CD8-positive, alpha-beta T cell (primary cell): ENCODE measurements at regions of chr11 and their contacts with region 1.

Region 1: GRCh38 chr11:47578524-47579460 is at the starts of genes KBTBD4 and NDUFS3:
- DNase-seq: peak; percentile 74 to 95 (median 89)
- ATAC-seq: peak; percentile 94
- H3K4me3 ChIP-seq: peak within 1 kb of the TSS; percentile 90 to 92
- H3K4me3 Mint-ChIP-seq: peak within 1 kb of the TSS; percentile 99
- H3K27ac ChIP-seq: peak within 1 kb of the TSS; percentile 76 to 84
- H3K27ac Mint-ChIP-seq: peak within 1 kb of the TSS; percentile 97
- H3K4me1 ChIP-seq: peaks cover 31% of the 10 kb centered on the region
- H3K4me1 Mint-ChIP-seq: peaks cover 54% of the 10 kb centered on the region
- H3K27me3 ChIP-seq: no peaks in the 10 kb centered on the region
- H3K27me3 Mint-ChIP-seq: no peaks in the 10 kb centered on the region
- CTCF ChIP-seq: no peak
- total RNA-seq, gene KBTBD4: 31.8 to 32.6 TPM
- total RNA-seq, gene NDUFS3: 159 to 179 TPM

Region 2: GRCh38 chr11:47204637-47204989 is 374.2 kb before region 1 on chr11:
- CTCF ChIA-PET with region 1: no interaction called
- POLR2A ChIA-PET with region 1: no interaction called
- intact Hi-C with region 1: no loop called
- DNase-seq: no peak
- ATAC-seq: no peak
- H3K4me3 ChIP-seq: no peak overlapping the region
- H3K4me3 Mint-ChIP-seq: no peak overlapping the region
- H3K27ac ChIP-seq: no peak overlapping the region
- H3K27ac Mint-ChIP-seq: no peak overlapping the region
- H3K4me1 ChIP-seq: no peaks in the 10 kb centered on the region
- H3K4me1 Mint-ChIP-seq: no peaks in the 10 kb centered on the region
- H3K27me3 ChIP-seq: no peaks in the 10 kb centered on the region
- H3K27me3 Mint-ChIP-seq: no peaks in the 10 kb centered on the region
- CTCF ChIP-seq: no peak

Region 3: DNA sequence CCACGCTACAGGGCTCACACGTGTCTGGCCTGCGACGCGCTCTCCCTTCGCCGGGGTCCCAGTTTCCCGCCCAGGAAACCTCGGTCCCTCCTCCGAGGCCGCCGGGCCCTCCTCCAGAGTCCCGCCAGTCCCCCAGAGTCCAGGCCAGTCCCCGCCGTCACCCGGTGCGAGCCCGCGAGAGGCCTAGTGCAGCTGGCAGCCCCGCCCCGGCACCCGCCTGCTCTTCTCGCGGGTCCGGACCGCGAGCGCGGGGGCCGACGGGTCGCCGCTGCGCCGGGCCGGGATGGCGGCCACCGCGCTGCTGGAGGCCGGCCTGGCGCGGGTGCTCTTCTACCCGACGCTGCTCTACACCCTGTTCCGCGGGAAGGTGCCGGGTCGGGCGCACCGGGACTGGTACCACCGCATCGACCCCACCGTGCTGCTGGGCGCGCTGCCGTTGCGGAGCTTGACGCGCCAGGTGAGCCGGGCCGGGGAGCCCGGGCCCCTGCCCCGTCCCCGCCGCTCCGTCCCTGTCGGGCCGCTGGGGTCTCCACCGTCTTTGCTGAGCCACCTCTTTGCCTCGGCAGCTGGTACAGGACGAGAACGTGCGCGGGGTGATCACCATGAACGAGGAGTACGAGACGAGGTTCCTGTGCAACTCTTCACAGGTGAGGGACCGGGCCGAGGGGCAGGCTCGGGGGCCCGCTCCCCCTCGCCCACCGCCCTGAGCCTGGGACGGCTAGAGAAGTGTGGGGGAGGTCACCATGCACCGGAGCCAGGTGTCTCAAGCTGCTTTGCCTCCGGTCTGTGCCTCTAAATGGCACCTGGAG is 13.2 kb before region 1 on chr11 and contains the start of gene PTPMT1:
- CTCF ChIA-PET with region 1: interaction called, 3 read pairs
- POLR2A ChIA-PET with region 1: interaction called, 19 read pairs
- intact Hi-C with region 1: loop called in 1 of 2 experiments (anchors 1 kb)
- DNase-seq: peak; percentile 26 to 79 (median 63)
- ATAC-seq: peak; percentile 85
- H3K4me3 ChIP-seq: peak within 1 kb of the TSS; percentile 76 to 83
- H3K4me3 Mint-ChIP-seq: peak within 1 kb of the TSS; percentile 85
- H3K27ac ChIP-seq: peak within 1 kb of the TSS; percentile 76 to 86
- H3K27ac Mint-ChIP-seq: peak within 1 kb of the TSS; percentile 84
- H3K4me1 ChIP-seq: peaks cover 13% of the 10 kb centered on the region
- H3K4me1 Mint-ChIP-seq: peaks cover 27% of the 10 kb centered on the region
- H3K27me3 ChIP-seq: no peaks in the 10 kb centered on the region
- H3K27me3 Mint-ChIP-seq: no peaks in the 10 kb centered on the region
- CTCF ChIP-seq: no peak
- total RNA-seq, gene PTPMT1: 24.4 to 24.5 TPM

Region 4: DNA sequence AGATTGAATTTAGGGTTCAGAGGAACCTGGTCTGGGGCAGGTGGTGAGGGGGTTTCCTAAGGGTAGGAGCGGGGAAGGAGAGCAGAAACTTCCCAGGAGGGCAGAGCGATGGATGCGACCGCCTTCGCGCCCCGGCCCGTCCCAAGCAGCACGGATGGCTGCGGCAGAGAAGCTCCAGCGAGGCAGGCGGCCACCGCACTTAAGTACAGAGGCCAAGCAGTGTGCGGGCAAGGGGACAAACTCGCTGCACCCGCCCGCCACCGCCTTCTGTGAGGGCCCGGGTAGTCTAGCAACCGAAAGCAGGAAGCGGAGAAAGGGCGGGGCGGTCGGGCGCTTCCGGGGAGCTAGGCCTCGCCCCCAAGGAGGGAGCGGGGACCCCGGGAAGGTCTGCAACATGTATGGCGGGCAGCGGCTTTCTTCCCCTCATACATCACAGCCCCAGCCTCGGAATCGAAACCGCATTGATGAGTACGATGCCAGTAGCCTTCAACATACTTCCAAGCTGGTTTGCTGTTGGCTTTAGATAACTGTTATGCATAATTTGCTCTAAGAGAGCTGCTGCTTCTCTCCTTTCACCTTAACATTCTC is 136.4 kb after region 1 on chr11 and contains the start of gene AGBL2:
- CTCF ChIA-PET with region 1: no interaction called
- POLR2A ChIA-PET with region 1: interaction called, 4 read pairs
- intact Hi-C with region 1: loop called (anchors 2 kb)
- DNase-seq: peak; percentile 70 to 91 (median 86)
- ATAC-seq: peak; percentile 99
- H3K4me3 ChIP-seq: peak within 1 kb of the TSS; percentile 66 to 88
- H3K4me3 Mint-ChIP-seq: peak within 1 kb of the TSS; percentile 96
- H3K27ac ChIP-seq: peak within 1 kb of the TSS; percentile 81 to 88
- H3K27ac Mint-ChIP-seq: peak within 1 kb of the TSS; percentile 94
- H3K4me1 ChIP-seq: peaks cover 14% of the 10 kb centered on the region
- H3K4me1 Mint-ChIP-seq: peaks cover 21% of the 10 kb centered on the region
- H3K27me3 ChIP-seq: no peaks in the 10 kb centered on the region
- H3K27me3 Mint-ChIP-seq: no peaks in the 10 kb centered on the region
- CTCF ChIP-seq: no peak
- total RNA-seq, gene AGBL2: 3.6 to 5.0 TPM